Thyroid gland (tissue), 4 donors: ENCODE measurements at regions of chr4 and their contacts with region 1.

Region 1: GRCh38 chr4:128809477-128810330 is at the start of gene JADE1:
- DNase-seq: peak; percentile 95 to 96
- H3K4me3 ChIP-seq: peak within 1 kb of the TSS; percentile 49 to 69 (median 62)
- H3K27ac ChIP-seq: peak within 1 kb of the TSS; percentile 90 to 97 (median 96)
- H3K4me1 ChIP-seq: peaks cover 9 to 20% of the 10 kb centered on the region in 2 donors
- H3K27me3 ChIP-seq: no peaks in the 10 kb centered on the region
- CTCF ChIP-seq: peak in 5 of 6 experiments; percentile 21 to 69 (median 58)
- POLR2A ChIP-seq: peak; percentile 11 to 89
- total RNA-seq, gene JADE1: 63.5 to 102 (median 74.4) TPM

Region 2: GRCh38 chr4:127965062-127965802 is 844.5 kb before region 1 on chr4 and contains the starts of genes ABHD18 and MFSD8:
- intact Hi-C with region 1: loop called (anchors 10 kb)
- DNase-seq: peak; percentile 99 to 100
- H3K4me3 ChIP-seq: peak within 1 kb of the TSS; percentile 91 to 95 (median 91)
- H3K27ac ChIP-seq: peak within 1 kb of the TSS; percentile 81 to 96 (median 87)
- H3K4me1 ChIP-seq: peaks cover 3 to 5% of the 10 kb centered on the region in 2 donors
- H3K27me3 ChIP-seq: no peaks in the 10 kb centered on the region
- CTCF ChIP-seq: peak in 5 of 6 experiments; percentile 27 to 57 (median 49)
- POLR2A ChIP-seq: peak in 1 of 2 donors; percentile 91
- total RNA-seq, gene ABHD18: 14.6 to 28.2 (median 18.5) TPM
- total RNA-seq, gene MFSD8: 32.5 to 80.9 (median 54.0) TPM

Region 3: GRCh38 chr4:127997534-127998388 is 811.9 kb before region 1 on chr4:
- intact Hi-C with region 1: no loop called
- DNase-seq: peak in 1 of 2 donors; percentile 5
- H3K4me3 ChIP-seq: no peak overlapping the region
- H3K27ac ChIP-seq: no peak overlapping the region
- H3K4me1 ChIP-seq: no peaks in the 10 kb centered on the region
- H3K27me3 ChIP-seq: no peaks in the 10 kb centered on the region
- CTCF ChIP-seq: no peak
- POLR2A ChIP-seq: no peak

Region 4: DNA sequence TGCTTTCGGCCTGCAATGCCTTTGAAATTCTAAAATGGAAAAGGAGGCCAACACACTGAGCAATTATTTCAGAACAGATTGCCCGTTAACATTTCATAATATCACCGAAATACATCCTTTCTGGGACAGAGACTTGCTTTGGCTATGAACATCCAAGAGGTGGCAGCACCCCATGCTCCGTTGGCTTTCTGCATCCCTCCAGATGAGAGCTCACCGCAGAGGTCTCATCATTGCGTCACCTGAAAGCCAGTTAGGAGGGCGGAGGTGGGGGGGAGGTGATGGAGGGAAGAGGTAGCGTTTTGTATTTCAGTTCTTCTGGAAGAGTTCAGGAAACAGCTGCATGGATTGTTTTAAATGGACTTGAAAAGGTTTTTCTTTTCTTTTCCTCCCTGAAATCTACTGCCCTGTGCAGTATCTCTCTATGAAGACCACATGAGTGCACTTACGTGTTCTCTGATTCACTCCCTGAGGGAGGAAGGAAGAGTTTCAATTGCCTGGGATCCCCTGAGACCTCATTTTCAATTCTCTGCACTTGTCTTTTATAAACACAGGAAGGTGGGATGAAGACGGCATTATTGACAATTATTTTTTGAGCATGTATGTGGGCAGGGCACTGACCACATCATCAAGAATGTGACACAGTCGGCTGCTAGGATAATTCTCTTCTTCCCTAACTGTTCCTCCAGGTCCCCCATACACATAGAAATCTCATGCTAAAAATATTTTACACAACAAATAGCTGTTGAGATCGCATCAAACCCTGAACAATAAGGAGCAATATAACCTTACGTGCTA is 355.2 kb before region 1 on chr4:
- intact Hi-C with region 1: loop called (anchors 5 kb)
- DNase-seq: peak; percentile 89 to 91
- H3K4me3 ChIP-seq: no peak overlapping the region
- H3K27ac ChIP-seq: peak overlapping the region; percentile 53 to 62 (median 61)
- H3K4me1 ChIP-seq: peaks cover 7 to 21% of the 10 kb centered on the region in 2 donors
- H3K27me3 ChIP-seq: no peaks in the 10 kb centered on the region
- CTCF ChIP-seq: peak; percentile 27 to 91 (median 81)
- POLR2A ChIP-seq: no peak

Region 5: DNA sequence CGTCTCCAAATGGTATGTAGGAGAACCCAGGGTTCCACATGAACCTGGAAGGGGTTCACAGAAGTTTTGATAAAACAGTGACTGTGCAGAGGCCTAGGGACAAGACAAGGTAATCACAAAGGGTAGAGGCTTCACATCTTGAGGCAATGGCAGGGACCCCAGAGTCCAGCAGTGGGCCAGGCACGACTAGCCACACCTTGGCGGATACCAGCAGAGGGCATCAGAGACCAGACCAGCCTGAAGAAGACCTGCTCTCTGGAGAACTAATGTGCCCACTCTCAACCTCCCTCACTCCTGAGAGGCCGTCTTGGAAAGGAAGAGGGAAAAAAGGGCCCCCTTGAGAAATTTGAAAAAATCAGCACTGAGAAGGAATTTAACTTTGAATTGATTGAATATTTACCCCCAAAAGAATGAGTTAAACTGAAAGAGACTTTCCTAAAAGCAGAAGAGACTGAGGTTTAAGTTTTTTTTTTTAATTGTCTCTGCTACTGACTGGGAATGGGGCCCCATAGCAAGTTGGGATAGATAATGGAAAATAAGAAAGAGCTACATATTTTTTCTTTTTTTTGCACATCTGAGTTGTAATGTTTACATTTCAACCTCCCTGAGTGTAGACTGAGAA is 244.0 kb before region 1 on chr4:
- intact Hi-C with region 1: loop called (anchors 10 kb)
- DNase-seq: peak; percentile 73 to 74
- H3K4me3 ChIP-seq: no peak overlapping the region
- H3K27ac ChIP-seq: peak overlapping the region in 1 of 3 donors; percentile 34
- H3K4me1 ChIP-seq: peaks cover 21 to 43% of the 10 kb centered on the region in 2 donors
- H3K27me3 ChIP-seq: no peaks in the 10 kb centered on the region
- CTCF ChIP-seq: peak; percentile 25 to 89 (median 74)
- POLR2A ChIP-seq: no peak

Region 6: DNA sequence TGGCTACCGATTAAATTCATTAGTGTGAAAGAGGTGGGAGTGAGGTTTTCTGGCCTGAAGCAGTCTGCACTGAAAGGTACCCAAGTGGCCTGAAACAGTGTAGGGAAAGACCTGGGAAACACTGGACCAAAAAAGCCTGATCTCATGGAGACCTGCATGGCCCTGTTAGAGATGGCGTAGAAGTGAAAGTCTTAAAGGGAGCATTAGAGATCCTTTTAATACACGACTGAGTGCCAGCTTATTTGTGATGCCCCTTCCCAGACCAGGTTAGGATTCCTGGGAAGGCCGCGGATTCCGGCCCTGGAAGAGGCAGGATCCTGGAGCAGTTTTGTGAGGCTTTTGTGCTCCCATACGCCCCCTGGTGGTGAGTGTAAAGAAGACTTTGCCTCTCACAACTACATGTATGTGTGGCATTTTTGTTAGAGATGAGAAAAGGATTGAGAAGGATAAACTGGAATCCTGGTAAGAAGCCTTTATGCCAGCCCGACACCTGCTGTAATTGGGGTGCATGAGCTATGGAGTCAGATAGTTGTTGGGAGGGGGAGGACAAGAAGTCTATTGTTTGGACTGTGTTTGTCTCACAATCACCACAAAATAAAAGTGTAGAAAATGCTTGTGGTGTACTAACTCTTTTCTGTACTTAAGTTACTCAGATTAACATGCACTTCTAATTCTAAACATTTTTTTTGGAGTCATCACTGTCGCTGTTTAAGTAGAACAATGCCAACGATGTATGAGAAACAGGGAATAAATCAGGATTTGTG is 53.8 kb after region 1 on chr4:
- intact Hi-C with region 1: loop called (anchors 5 kb)
- DNase-seq: peak; percentile 69 to 81
- H3K4me3 ChIP-seq: no peak overlapping the region
- H3K27ac ChIP-seq: peak overlapping the region in 1 of 3 donors; percentile 24
- H3K4me1 ChIP-seq: peaks cover 0 to 7% of the 10 kb centered on the region in 2 donors
- H3K27me3 ChIP-seq: no peaks in the 10 kb centered on the region
- CTCF ChIP-seq: peak; percentile 46 to 91 (median 78)
- POLR2A ChIP-seq: no peak